Heart left ventricle (tissue), 16 donors: ENCODE measurements at regions of chr7 and their contacts with region 1.

Region 1: DNA sequence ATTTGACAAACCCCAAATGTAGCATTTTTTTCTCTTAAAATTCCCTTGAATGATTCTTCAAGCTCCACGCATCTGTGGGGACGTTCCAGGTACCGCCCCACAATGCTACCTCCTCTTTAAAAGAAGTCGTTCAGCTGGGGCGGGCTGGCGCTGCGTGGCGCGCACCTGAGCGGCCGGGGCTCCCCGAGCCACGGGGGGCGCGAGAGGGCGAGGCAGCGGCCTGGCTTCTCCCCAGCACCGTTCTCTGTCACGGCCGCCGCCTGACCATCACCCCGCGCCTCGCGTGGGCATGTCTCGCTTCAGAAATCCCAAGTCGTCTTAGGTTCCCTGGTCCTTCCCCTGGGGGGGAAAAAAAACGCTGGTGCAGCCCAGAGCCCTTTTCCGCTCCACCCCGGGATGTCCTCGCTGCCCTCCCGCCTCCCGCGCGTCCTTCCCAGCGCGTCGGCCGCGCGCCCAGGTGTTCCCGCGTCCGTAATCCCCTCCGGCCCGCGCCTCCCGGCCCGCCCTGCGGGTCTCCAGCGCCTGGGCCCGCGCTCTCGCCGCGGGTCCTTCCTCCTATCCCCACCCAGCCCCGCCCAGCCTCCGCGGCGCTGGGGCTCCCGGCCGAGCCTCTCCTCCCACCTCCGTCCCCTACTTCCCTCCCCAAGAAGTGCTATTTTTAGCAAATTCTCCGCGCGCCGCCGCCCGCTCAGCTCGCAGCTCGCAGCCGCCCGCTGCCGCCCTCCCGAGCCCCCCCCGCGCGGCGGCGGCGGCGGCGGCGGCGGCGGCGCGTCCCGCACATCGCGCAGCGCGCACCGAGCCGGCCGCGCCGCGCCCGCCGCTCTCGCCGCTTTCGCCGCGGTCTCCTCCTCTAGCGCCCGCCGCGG is 58.8 kb upstream of the PRPS1L1 start:
- DNase-seq: peak; percentile 39 to 71 (median 66)
- ATAC-seq: peak; percentile 24 to 89 (median 78)
- H3K4me3 ChIP-seq: peak overlapping the region; percentile 64 to 93 (median 83)
- H3K27ac ChIP-seq: peak overlapping the region in 10 of 12 donors; percentile 4 to 83 (median 74)
- H3K4me1 ChIP-seq: peaks cover 0 to 18% (median 9%) of the 10 kb centered on the region in 12 donors
- H3K27me3 ChIP-seq: peaks cover 0 to 23% (median 0%) of the 10 kb centered on the region in 9 donors
- CTCF ChIP-seq: peak in 7 of 12 donors; percentile 13 to 45 (median 27)
- POLR2A ChIP-seq: no peak

Region 2: DNA sequence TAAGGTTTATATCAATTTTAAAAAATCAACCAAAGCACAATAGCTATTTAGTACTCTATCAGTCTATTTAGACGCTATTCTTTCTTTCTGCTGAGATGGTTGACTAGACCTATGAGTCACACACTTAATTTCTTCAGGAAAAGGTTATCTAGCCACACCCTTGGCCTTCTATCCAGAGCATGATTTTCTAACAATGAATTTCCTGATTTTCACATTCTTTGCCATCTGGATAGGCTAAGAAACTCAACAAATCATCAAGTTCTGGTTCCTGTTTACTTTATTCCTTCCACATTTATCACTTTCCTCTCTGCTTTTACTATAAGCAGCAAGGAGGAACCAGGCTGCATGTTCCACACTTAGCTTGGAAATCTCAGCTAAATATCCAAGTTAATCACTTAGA is 66.8 kb before region 1 on chr7:
- intact Hi-C with region 1: no loop called
- DNase-seq: no peak
- ATAC-seq: peak in 3 of 4 donors; percentile 75 to 88 (median 85)
- H3K4me3 ChIP-seq: no peak overlapping the region
- H3K27ac ChIP-seq: peak overlapping the region in 9 of 12 donors; percentile 13 to 72 (median 31)
- H3K4me1 ChIP-seq: peaks cover 0 to 16% (median 4%) of the 10 kb centered on the region in 12 donors
- H3K27me3 ChIP-seq: no peaks in the 10 kb centered on the region
- CTCF ChIP-seq: no peak
- POLR2A ChIP-seq: no peak

Region 3: DNA sequence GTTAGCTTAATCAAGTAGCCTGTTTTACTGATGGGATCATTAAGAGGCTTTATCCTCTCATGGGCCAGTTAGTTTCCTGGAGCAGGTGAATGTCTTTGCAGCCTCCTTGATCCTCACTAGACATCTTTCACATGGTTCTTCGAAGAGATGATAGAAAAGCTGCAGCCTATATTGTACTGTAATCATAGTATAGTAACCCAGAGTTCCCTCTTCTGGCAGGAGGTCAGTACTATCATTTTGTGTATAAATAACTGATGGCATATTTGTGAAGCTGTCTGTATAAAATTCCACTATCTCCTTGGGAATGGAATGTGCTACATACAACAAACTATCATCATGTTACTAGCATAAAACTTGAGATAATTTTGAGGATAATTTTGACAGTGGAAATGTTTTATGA is 65.0 kb after region 1 on chr7:
- intact Hi-C with region 1: loop called in 1 of 10 experiments (anchors 10 kb)
- DNase-seq: no peak
- ATAC-seq: no peak
- H3K4me3 ChIP-seq: no peak overlapping the region
- H3K27ac ChIP-seq: no peak overlapping the region
- H3K4me1 ChIP-seq: peaks cover 0 to 11% (median 0%) of the 10 kb centered on the region in 12 donors
- H3K27me3 ChIP-seq: no peaks in the 10 kb centered on the region
- CTCF ChIP-seq: no peak
- POLR2A ChIP-seq: no peak

Region 4: GRCh38 chr7:18163091-18163490 is 76.7 kb after region 1 on chr7:
- intact Hi-C with region 1: loop called in 2 of 10 experiments (anchors 10 kb)
- DNase-seq: no peak
- ATAC-seq: no peak
- H3K4me3 ChIP-seq: no peak overlapping the region
- H3K27ac ChIP-seq: peak overlapping the region in 1 of 12 donors; percentile 18
- H3K4me1 ChIP-seq: peaks cover 0 to 19% (median 1%) of the 10 kb centered on the region in 12 donors
- H3K27me3 ChIP-seq: no peaks in the 10 kb centered on the region
- CTCF ChIP-seq: no peak
- POLR2A ChIP-seq: no peak

Region 5: GRCh38 chr7:18212758-18213157 is 126.4 kb after region 1 on chr7:
- intact Hi-C with region 1: loop called in 2 of 10 experiments (anchors 5 to 10 kb)
- DNase-seq: peak in 1 of 5 donors; percentile 16
- ATAC-seq: peak; percentile 51 to 87 (median 78)
- H3K4me3 ChIP-seq: no peak overlapping the region
- H3K27ac ChIP-seq: peak overlapping the region in 9 of 12 donors; percentile 6 to 61 (median 53)
- H3K4me1 ChIP-seq: peaks cover 0 to 26% (median 11%) of the 10 kb centered on the region in 12 donors
- H3K27me3 ChIP-seq: no peaks in the 10 kb centered on the region
- CTCF ChIP-seq: no peak
- POLR2A ChIP-seq: no peak

Region 6: DNA sequence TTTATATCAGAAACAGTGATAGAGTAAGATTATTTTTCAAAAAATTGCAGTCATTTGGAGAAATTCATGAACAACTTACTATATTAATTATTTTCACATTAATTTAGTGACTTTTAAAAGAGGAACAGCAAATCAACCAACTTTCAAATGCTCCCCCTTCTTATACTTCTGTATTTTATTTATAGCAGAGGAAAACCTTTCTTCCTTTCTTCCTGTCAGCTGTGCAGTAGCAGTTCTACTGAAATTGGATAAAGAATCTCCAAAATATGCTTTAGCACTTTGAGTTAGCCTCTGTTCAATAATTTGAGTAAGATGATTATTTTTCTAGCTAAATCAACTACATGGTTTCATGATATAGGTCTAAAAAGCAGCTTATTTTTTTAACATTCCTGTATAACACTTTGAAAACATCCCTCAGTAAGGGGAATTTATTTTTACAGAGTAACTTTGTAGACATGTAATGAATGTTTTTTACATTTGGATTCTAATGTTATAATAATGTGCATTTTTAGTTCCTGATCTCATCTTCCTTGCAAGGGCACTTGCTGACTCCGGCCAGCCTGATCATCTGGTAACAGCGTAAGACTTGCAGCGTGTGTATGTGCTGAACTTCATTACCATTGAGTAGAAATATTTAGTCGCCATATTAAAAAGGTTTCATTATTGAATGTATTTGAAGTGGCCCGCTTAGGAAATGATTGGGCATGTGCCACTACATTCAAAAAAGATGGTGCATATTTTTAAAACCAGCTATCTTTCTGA is 250.8 kb after region 1 on chr7:
- intact Hi-C with region 1: loop called in 1 of 10 experiments (anchors 10 kb)
- DNase-seq: peak in 2 of 5 donors; percentile 29 to 40
- ATAC-seq: peak in 3 of 4 donors; percentile 52 to 73 (median 59)
- H3K4me3 ChIP-seq: peak overlapping the region in 2 of 12 donors; percentile 4 to 6
- H3K27ac ChIP-seq: peak overlapping the region in 3 of 12 donors; percentile 2 to 59 (median 19)
- H3K4me1 ChIP-seq: peaks cover 0 to 30% (median 0%) of the 10 kb centered on the region in 12 donors
- H3K27me3 ChIP-seq: no peaks in the 10 kb centered on the region
- CTCF ChIP-seq: no peak
- POLR2A ChIP-seq: no peak